Body of pancreas (tissue), 4 donors: ENCODE measurements at regions of chr14 and their contacts with region 1.

Region 1: GRCh38 chr14:81565441-81566290 is 32.0 kb upstream of the SEL1L start:
- DNase-seq: peak; percentile 63 to 72 (median 71)
- ATAC-seq: peak; percentile 93
- H3K4me3 ChIP-seq: no peak overlapping the region
- H3K27ac ChIP-seq: peak overlapping the region in 1 of 4 donors; percentile 14
- H3K4me1 ChIP-seq: peaks cover 16% of the 10 kb centered on the region
- H3K27me3 ChIP-seq: no peaks in the 10 kb centered on the region
- CTCF ChIP-seq: peak; percentile 25 to 85 (median 73)
- POLR2A ChIP-seq: no peak

Region 2: GRCh38 chr14:81625343-81625742 is 59.7 kb after region 1 on chr14:
- intact Hi-C with region 1: loop called (anchors 10 kb)
- DNase-seq: no peak
- ATAC-seq: peak; percentile 66
- H3K4me3 ChIP-seq: no peak overlapping the region
- H3K27ac ChIP-seq: no peak overlapping the region
- H3K4me1 ChIP-seq: no peaks in the 10 kb centered on the region
- H3K27me3 ChIP-seq: no peaks in the 10 kb centered on the region
- CTCF ChIP-seq: peak in 6 of 7 experiments; percentile 34 to 71 (median 59)
- POLR2A ChIP-seq: no peak

Region 3: DNA sequence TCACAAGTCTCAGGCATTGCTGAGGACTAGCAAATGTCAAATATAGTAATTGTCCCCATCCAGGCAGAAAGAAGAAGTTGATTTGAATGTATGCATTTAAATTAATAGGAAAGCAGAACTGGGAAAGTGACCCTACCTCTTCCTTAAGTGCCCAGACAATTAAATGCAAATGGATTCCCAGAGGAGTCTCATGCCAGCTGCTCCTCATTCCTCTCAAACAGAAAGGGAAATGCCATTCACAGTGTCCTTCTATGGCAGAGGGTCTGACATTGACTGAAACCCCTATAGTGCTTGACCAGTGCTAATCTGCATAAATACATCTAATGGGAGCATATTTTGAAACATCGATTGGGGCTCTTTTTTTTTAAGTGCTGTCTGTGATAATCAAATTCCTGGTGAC is 260.4 kb after region 1 on chr14:
- intact Hi-C with region 1: no loop called
- DNase-seq: no peak
- ATAC-seq: no peak
- H3K4me3 ChIP-seq: no peak overlapping the region
- H3K27ac ChIP-seq: no peak overlapping the region
- H3K4me1 ChIP-seq: peaks cover 8% of the 10 kb centered on the region
- H3K27me3 ChIP-seq: no peaks in the 10 kb centered on the region
- CTCF ChIP-seq: no peak
- POLR2A ChIP-seq: no peak